T-cell (primary cell): ENCODE measurements at regions of chr1 and their contacts with region 1.

Region 1: DNA sequence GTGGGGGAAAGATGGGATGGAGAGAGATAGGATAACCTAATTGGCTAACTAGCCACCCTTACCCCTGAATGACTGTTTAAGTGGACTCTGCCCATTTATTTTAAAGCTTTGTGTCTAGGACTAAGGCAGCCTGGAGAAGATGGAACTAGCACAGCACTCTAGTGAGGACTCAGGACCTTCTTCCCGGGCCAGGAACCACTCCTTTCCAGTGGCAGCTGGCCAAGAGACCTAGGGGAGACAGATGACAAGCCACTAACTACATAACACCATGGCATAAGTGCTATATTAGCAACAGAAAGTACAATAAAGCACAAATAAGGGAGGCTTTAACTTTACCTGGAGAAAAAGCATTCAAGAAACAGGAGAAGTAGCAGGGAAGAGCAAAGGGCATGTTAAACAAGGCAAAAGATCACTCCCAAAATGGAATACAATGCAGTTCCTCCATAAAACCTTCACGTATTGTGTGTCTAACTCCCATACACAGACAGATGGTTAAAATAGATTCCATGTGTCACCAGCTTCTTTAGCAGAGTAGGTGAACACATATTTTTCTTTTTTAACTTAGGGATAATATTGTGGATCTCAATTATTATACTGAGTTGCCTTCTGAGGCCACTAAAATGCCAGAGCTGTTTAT is 20.6 kb downstream of the CLCA1 start:
- DNase-seq: no peak
- ATAC-seq: no peak
- H3K4me3 ChIP-seq: no peak overlapping the region
- H3K4me3 Mint-ChIP-seq: no peak overlapping the region
- H3K27ac ChIP-seq: no peak overlapping the region
- H3K27ac Mint-ChIP-seq: no peak overlapping the region
- H3K4me1 ChIP-seq: no peaks in the 10 kb centered on the region
- H3K4me1 Mint-ChIP-seq: no peaks in the 10 kb centered on the region
- H3K27me3 ChIP-seq: peaks cover 0 to 4% of the 10 kb centered on the region in 2 experiments
- H3K27me3 Mint-ChIP-seq: peaks cover 0 to 3% of the 10 kb centered on the region in 2 donors

Region 2: GRCh38 chr1:86305731-86306130 is 183.6 kb before region 1 on chr1:
- CTCF ChIA-PET with region 1: no interaction called
- POLR2A ChIA-PET with region 1: no interaction called
- DNase-seq: no peak
- ATAC-seq: no peak
- H3K4me3 ChIP-seq: no peak overlapping the region
- H3K4me3 Mint-ChIP-seq: no peak overlapping the region
- H3K27ac ChIP-seq: no peak overlapping the region
- H3K27ac Mint-ChIP-seq: no peak overlapping the region
- H3K4me1 ChIP-seq: no peaks in the 10 kb centered on the region
- H3K4me1 Mint-ChIP-seq: no peaks in the 10 kb centered on the region
- H3K27me3 ChIP-seq: no peaks in the 10 kb centered on the region
- H3K27me3 Mint-ChIP-seq: no peaks in the 10 kb centered on the region

Region 3: DNA sequence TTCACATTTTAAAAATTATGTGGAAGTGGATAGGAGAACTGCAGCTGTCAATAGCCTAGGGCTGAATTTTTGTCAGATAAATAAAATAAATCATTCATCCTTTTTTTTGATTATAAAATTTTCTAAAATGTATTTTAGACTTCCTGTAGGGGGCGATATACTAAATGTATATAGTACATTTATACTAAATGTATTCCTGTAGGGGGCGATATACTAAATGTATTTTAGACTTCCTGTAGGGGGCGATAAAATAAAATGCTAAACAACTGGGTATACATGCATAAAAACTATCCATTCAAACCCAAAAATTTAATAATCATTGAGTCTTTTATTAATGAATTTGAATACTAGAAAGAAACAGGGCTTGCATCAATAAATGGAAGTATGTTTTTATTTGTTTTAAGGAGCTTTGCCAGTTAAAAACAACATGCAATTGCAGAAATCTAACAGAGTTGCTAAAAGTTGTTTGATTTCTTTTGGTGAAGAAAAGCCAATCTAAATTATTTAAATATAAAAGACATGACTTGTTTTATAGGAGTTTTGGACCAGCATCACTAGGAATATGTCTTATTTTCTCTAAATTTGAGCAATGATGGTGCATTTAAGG is 10.7 kb after region 1 on chr1:
- CTCF ChIA-PET with region 1: interaction called, 6 to 10 read pairs
- POLR2A ChIA-PET with region 1: no interaction called
- DNase-seq: peak in 1 of 35 experiments; percentile 59
- ATAC-seq: peak; percentile 41 to 68 (median 52)
- H3K4me3 ChIP-seq: no peak overlapping the region
- H3K4me3 Mint-ChIP-seq: no peak overlapping the region
- H3K27ac ChIP-seq: no peak overlapping the region
- H3K27ac Mint-ChIP-seq: peak overlapping the region in 1 of 2 donors; percentile 1
- H3K4me1 ChIP-seq: peaks cover 0 to 18% of the 10 kb centered on the region in 2 experiments
- H3K4me1 Mint-ChIP-seq: peaks cover 7 to 17% (median 11%) of the 10 kb centered on the region in 3 donors
- H3K27me3 ChIP-seq: peaks cover 0 to 11% of the 10 kb centered on the region in 2 experiments
- H3K27me3 Mint-ChIP-seq: peaks cover 9 to 24% of the 10 kb centered on the region in 2 donors

Region 4: DNA sequence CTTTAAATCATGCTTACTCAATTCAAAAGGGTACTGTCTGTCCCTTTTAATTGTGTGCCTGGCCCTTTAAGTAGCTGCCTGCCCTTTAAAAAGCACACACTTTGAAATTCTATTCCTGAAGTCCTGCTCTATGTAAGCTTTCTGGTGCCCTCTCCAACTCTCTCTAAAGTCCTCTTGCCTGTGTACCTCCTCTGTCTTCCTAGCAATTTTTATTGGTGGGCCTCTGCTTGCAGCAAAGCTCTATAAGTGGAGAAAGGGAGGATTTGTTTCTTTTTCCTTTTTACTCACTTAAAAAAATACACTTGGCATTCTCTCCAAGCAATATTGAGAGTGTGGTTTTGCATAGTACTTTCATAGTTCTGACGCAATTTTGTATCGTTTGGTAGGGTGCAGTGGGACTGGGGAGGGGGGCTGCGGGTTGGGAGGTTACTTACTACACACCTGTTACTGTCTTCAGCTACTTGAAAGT is 974.7 kb after region 1 on chr1:
- CTCF ChIA-PET with region 1: no interaction called
- POLR2A ChIA-PET with region 1: no interaction called
- DNase-seq: no peak
- ATAC-seq: no peak
- H3K4me3 ChIP-seq: no peak overlapping the region
- H3K4me3 Mint-ChIP-seq: no peak overlapping the region
- H3K27ac ChIP-seq: no peak overlapping the region
- H3K27ac Mint-ChIP-seq: no peak overlapping the region
- H3K4me1 ChIP-seq: no peaks in the 10 kb centered on the region
- H3K4me1 Mint-ChIP-seq: no peaks in the 10 kb centered on the region
- H3K27me3 ChIP-seq: no peaks in the 10 kb centered on the region
- H3K27me3 Mint-ChIP-seq: peaks cover 3 to 16% of the 10 kb centered on the region in 2 donors